H1 (cell line): ENCODE measurements at regions of chr6 and their contacts with region 1.

Region 1: DNA sequence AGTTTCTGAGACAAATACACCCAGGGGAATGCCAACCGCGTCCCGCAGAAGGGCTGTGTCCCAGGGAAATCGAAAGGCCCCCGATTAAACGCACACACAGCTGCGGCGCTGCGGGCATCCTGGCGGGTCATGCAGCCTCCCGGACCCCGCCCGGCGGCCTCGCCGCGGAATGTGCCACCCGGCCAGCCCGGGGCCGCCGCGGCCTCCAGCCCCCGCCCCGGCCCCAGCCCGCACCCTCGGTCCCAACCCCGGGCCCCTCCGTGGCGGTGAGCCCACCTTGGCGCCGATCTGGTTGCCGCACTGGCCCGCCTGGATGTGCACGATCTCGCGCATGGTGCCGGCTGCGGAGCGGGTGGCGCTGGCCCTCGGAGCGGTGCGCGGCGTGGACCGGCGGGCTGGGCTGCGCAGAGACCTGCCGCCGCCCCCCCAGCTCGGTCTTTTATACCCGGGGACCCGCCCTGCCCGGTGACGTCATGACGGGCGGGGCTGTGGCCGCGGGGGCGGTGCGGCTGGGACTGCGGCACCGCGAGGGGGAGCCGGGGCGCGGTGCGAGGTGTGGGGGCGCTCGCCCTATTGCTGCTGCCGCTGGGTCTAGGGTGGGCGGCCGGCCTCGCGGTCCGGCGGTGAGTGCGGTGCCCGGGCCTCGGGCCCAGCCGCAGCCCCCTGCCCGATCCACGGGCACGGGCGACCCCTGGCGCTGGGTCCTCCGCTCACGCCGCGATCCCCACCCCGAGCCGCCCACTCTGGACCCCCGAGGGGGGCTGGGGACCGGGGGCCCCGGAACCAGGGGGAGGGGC is at the start of gene TUBB2A:
- DNase-seq: peak in 1 of 2 experiments; percentile 90
- H3K4me3 ChIP-seq: peak within 1 kb of the TSS; percentile 60 to 79 (median 74)
- H3K27ac ChIP-seq: peak within 1 kb of the TSS; percentile 24; the same call in 1 of the 2 replicates
- H3K4me1 ChIP-seq: peaks cover 0 to 20% (median 9%) of the 10 kb centered on the region in 4 experiments; a peak in 5 of 7 replicates
- H3K27me3 ChIP-seq: no peaks in the 10 kb centered on the region
- CTCF ChIP-seq: peak; percentile 30 to 61 (median 45)
- EP300 ChIP-seq: peak in 1 of 2 experiments; percentile 43; a peak in 1 of 3 replicates
- POLR2A ChIP-seq: peak; percentile 67 to 78
- RAD21 ChIP-seq: peak; percentile 1 to 34; a peak in 1 of 4 replicates
- total RNA-seq, gene TUBB2A: 330 and 349 TPM in 2 replicates

Region 2: GRCh38 chr6:3176562-3177355 is 19.4 kb after region 1 on chr6:
- CTCF ChIA-PET with region 1: interaction called, 4 read pairs
- POLR2A ChIA-PET with region 1: interaction called, 13 read pairs
- DNase-seq: no peak
- H3K4me3 ChIP-seq: no peak overlapping the region
- H3K27ac ChIP-seq: no peak overlapping the region
- H3K4me1 ChIP-seq: peaks cover 0 to 3% (median 0%) of the 10 kb centered on the region in 4 experiments; a peak in 1 of 7 replicates
- H3K27me3 ChIP-seq: no peaks in the 10 kb centered on the region
- CTCF ChIP-seq: no peak
- EP300 ChIP-seq: no peak
- POLR2A ChIP-seq: no peak
- RAD21 ChIP-seq: no peak

Region 3: DNA sequence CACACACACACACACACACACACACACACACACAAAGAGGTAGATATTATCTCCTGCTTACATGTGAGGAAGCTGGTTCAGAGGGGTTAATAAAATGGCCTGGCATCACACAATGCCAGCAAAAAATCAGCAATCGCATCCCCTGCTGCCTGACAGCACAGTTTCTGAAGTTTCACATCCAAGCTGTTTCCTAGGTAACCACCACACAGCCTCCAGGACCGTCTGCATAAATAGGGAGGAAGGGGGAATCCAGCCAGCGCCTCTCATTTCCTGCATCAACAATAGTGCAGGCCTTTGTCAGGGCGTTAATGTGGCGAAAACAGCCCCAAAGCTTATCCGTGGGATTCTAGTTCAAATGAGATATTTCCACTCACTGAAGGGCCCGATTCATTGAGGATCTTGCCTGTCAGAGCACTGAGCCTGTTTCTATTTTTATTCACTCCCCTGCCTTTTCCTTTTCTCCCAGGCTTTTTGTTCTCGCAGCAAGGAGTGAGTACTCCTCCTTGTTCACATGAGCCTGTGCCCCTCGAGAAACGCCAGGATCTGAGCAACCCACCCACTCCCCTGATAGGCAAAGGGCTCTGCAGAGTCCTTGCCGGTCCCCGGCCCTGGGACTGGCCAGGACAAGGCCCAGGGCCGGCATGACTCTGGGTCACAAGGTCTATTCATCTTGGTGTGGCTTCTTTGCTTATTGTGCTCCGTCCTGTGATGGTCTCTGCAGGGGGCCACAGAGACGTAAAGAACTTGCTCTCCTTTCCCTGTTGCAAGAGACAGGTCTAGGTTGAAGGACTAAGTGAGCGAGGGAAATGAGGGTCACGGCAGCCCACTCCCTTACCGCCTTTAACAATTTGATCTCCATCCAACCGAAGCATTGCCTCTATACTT is 37.4 kb after region 1 on chr6:
- CTCF ChIA-PET with region 1: interaction called, 17 read pairs
- POLR2A ChIA-PET with region 1: interaction called, 7 read pairs
- DNase-seq: peak in 1 of 2 experiments; percentile 62
- H3K4me3 ChIP-seq: peak overlapping the region in 1 of 4 experiments; percentile 28; a peak in 1 of 8 replicates
- H3K27ac ChIP-seq: peak overlapping the region; percentile 68
- H3K4me1 ChIP-seq: peaks cover 15 to 24% (median 20%) of the 10 kb centered on the region in 4 experiments
- H3K27me3 ChIP-seq: no peaks in the 10 kb centered on the region
- CTCF ChIP-seq: no peak
- EP300 ChIP-seq: no peak
- POLR2A ChIP-seq: no peak
- RAD21 ChIP-seq: no peak

Region 4: GRCh38 chr6:3506199-3506598 is 348.9 kb after region 1 on chr6:
- CTCF ChIA-PET with region 1: no interaction called
- POLR2A ChIA-PET with region 1: no interaction called
- DNase-seq: no peak
- H3K4me3 ChIP-seq: no peak overlapping the region
- H3K27ac ChIP-seq: no peak overlapping the region
- H3K4me1 ChIP-seq: peaks cover 5 to 6% (median 6%) of the 10 kb centered on the region in 4 experiments; a peak in 5 of 7 replicates
- H3K27me3 ChIP-seq: peaks cover 0 to 1% (median 0%) of the 10 kb centered on the region in 4 experiments; a peak in 1 of 7 replicates
- CTCF ChIP-seq: no peak
- EP300 ChIP-seq: no peak
- POLR2A ChIP-seq: no peak
- RAD21 ChIP-seq: no peak